ENCODE measurements at regions of chr9 and their contacts with region 1.

Region 1: DNA sequence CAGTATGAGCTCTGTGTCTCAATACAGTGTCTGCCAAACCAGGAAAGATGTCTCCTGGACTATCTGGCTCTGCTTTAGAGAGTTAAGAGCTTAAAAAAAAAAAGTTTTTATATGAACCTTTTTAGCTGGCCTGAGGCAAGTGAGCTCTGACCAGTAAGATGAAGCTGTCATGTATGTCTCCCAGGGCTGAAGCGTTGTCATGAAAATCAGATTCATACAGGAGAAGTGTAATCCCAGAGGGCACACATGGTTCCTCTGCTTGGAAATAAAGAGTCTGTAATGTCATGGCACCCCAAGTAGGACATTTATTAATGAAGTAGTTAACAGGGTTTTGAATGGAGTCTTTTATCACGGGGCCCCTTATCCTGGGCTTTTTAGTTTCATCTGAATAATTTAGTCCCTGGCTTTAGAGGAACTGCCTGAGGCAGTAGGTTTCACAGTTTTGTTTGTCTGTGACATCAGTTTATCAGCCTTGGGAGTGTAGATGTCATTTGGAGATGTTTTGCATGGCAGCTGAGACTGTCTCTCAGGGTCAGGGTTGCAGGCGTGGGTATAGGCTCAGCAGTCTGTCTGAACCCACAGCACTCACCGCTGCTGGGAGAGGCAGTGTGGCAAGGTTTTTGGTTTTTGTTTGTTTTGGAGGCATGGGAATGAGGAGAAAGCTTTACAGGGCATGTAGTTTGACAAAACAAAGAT is 223.3 kb downstream of the DIRAS2 start:
- DNase-seq: no peak
- ATAC-seq: no peak
- H3K4me3 ChIP-seq: no peak overlapping the region
- H3K27ac ChIP-seq: no peak overlapping the region
- H3K4me1 ChIP-seq: no peaks in the 10 kb centered on the region
- H3K27me3 ChIP-seq: peaks cover 0 to 12% (median 3%) of the 10 kb centered on the region in 7 donors
- CTCF ChIP-seq: no peak

Region 2: DNA sequence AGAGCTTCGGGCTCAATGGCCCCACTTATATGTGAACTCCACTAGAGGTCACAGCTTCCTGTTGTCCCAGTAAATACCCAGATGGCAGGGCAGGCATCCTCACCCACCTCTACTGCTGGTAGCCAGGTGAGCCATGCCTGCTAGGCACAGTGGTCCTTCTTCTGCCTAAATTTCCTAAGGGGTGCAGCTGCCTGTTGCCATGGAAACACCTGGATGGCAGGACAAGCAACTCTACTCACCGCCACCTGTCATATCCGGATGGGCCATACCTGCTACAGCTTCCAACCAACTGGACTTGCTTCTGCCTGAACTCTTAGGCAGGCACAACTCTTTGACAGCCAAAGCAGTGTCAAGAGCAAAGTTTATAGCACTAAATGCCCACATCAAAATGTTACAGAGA is 69.5 kb before region 1 on chr9:
- intact Hi-C with region 1: loop called in 1 of 10 experiments (anchors 2 kb)
- DNase-seq: no peak
- ATAC-seq: no peak
- H3K4me3 ChIP-seq: no peak overlapping the region
- H3K27ac ChIP-seq: no peak overlapping the region
- H3K4me1 ChIP-seq: no peaks in the 10 kb centered on the region
- H3K27me3 ChIP-seq: peaks cover 0 to 21% (median 6%) of the 10 kb centered on the region in 7 donors
- CTCF ChIP-seq: no peak

Region 3: DNA sequence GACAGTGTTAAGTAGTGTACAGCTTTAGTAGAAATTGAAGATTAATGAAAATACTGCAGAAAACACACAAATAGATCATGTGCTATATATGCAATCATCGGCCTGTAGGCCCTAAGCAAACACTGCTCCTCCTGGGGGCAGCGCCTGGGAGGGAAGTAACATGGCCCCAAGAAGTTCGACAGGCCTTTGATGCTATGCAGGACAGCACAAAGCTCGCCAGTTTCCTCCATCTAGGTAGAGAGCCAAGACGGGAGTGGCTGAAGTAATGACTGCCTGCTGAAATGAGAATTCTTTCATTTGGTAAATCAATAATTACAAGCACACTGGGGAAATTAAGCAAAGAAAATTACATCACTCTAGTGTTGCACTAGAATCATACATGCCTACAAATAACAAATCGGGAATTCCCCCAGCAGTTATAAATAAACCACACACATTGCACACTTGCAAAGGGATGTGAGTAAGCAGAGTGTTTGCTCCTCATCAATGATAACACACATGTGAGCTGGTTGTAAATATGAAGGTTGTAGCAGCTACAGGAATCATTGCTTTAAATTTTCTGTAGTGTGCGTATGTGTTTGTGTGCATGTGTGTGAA is 1224.2 kb after region 1 on chr9:
- intact Hi-C with region 1: no loop called
- DNase-seq: no peak
- ATAC-seq: peak in 1 of 8 donors; percentile 30
- H3K4me3 ChIP-seq: no peak overlapping the region
- H3K27ac ChIP-seq: no peak overlapping the region
- H3K4me1 ChIP-seq: peaks cover 0 to 3% (median 0%) of the 10 kb centered on the region in 9 donors
- H3K27me3 ChIP-seq: no peaks in the 10 kb centered on the region
- CTCF ChIP-seq: no peak

Measured in heart right ventricle (tissue), 16 donors.